Heart right ventricle (tissue), 16 donors: ENCODE measurements at regions of chr14 and their contacts with region 1.

Region 1: DNA sequence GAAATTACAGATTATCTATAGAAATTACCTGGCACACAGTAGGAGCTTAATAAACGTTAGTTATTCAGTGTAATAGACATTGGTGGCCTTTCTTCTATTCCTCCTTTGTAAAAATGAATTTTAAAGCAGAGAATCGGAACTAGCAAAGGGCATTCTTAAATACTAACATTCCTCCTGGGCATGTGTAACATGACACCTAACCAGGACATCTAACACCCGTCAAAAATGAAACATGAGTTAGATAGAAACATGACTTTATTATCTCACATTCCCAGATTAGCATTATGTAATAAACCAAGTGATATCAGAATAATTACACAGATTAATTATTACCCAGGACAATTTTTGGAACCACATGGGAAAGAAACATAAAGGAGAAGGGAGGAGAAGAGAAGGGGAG is 143.7 kb upstream of the CCDC196 start:
- DNase-seq: no peak
- ATAC-seq: no peak
- H3K4me3 ChIP-seq: no peak overlapping the region
- H3K27ac ChIP-seq: no peak overlapping the region
- H3K4me1 ChIP-seq: no peaks in the 10 kb centered on the region
- H3K27me3 ChIP-seq: no peaks in the 10 kb centered on the region
- CTCF ChIP-seq: no peak

Region 2: DNA sequence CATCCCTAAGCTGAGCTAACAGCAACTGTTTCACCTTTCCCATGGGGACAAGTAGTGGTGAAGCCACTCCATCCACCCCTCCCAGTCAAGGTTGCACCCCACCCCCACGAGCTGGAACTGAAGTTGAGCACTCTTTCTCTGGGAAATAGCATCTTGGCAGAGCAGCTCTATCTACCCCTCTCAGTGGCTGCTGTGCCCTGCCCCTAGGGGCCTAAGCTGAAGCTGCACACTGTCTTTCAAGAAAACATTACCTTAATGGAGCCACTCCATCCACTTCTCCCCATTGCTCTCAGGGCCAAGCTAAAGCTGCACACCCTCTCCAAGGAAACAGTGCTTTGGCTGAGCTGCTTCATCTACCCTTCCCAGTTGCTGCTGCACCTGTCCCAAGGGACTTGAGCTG is 26.9 kb before region 1 on chr14:
- intact Hi-C with region 1: loop called in 1 of 10 experiments (anchors 1 kb)
- DNase-seq: no peak
- ATAC-seq: no peak
- H3K4me3 ChIP-seq: no peak overlapping the region
- H3K27ac ChIP-seq: no peak overlapping the region
- H3K4me1 ChIP-seq: peaks cover 0 to 14% (median 5%) of the 10 kb centered on the region in 9 donors
- H3K27me3 ChIP-seq: no peaks in the 10 kb centered on the region
- CTCF ChIP-seq: no peak

Region 3: GRCh38 chr14:66696326-66696725 is 353.9 kb after region 1 on chr14:
- intact Hi-C with region 1: no loop called
- DNase-seq: no peak
- ATAC-seq: no peak
- H3K4me3 ChIP-seq: no peak overlapping the region
- H3K27ac ChIP-seq: no peak overlapping the region
- H3K4me1 ChIP-seq: peaks cover 0 to 6% (median 0%) of the 10 kb centered on the region in 9 donors
- H3K27me3 ChIP-seq: no peaks in the 10 kb centered on the region
- CTCF ChIP-seq: no peak